K562 (cell line): ENCODE measurements at regions of chr1 and their contacts with region 1.

Region 1: GRCh38 chr1:45011837-45012638 is at the start of gene UROD:
- DNase-seq: peak; percentile 95 to 100 (median 96)
- ATAC-seq: peak; percentile 73
- H3K4me3 ChIP-seq: peak within 1 kb of the TSS; percentile 86
- H3K27ac ChIP-seq: peak within 1 kb of the TSS; percentile 85
- H3K4me1 ChIP-seq: peaks cover 44 to 45% of the 10 kb centered on the region in 2 experiments
- H3K27me3 ChIP-seq: no peaks in the 10 kb centered on the region
- CTCF ChIP-seq: no peak
- EP300 ChIP-seq: peak; percentile 72; the same call in 1 of the 2 replicates
- POLR2A ChIP-seq: peak; percentile 98
- RAD21 ChIP-seq: peak in 1 of 2 experiments; percentile 5; a peak in 1 of 4 replicates
- polyA plus RNA-seq, gene UROD: 2,545 to 2,933 TPM

Region 2: GRCh38 chr1:44757420-44757819 is 254.6 kb before region 1 on chr1:
- CTCF ChIA-PET with region 1: no interaction called
- POLR2A ChIA-PET with region 1: no interaction called
- in situ Hi-C with region 1: no loop called
- intact Hi-C with region 1: no loop called
- DNase-seq: no peak
- ATAC-seq: no peak
- H3K4me3 ChIP-seq: no peak overlapping the region
- H3K27ac ChIP-seq: no peak overlapping the region
- H3K4me1 ChIP-seq: no peaks in the 10 kb centered on the region
- H3K27me3 ChIP-seq: no peaks in the 10 kb centered on the region
- CTCF ChIP-seq: no peak
- EP300 ChIP-seq: no peak
- POLR2A ChIP-seq: no peak
- RAD21 ChIP-seq: no peak

Region 3: DNA sequence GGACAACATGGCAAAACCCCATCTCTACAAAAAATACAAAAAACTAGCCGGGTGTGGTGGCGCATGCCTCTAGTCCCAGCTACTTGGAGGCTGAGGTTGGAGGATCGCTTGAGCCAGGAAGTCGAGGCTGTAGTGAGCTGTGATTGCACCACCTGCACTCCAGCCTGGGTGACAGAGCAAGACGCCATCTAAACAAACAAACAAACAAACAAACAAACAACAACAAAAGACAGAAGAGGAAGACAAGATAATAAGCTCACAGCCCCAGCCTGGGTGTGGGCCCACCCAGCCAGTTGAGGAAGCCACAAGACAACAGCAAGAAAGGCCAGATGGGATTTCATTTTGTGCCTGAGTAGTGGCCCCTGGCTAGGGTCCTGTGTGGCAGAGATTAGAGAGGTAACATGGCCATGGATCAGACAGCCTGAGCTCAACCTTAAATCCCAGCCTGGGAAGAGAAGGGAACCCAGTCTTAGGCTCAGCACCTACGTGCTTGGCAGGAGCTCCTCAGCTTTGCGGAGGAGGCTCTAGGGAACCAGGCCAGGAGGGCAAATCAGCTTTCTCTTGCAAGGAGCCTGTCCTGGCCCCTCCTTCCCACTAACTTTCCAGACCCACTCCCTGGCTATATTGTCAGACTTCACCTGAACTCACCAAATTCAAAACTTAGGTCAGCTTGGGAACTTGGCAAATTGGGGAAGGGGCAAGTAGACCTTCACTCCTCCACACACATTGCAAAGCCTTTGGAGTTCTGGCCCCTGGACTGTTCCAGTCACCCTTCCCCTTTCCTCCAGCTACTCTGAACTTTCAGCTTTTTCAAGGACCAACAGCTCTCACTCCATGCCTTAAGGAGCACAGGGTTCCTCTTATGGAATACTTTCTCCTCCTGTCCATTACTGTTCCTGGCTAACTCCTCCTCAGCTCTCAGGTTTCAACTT is 219.0 kb before region 1 on chr1:
- CTCF ChIA-PET with region 1: no interaction called
- POLR2A ChIA-PET with region 1: interaction called, 8 read pairs
- in situ Hi-C with region 1: loop called (anchors 5 kb)
- intact Hi-C with region 1: loop called (anchors 5 kb)
- DNase-seq: no peak
- ATAC-seq: no peak
- H3K4me3 ChIP-seq: no peak overlapping the region
- H3K27ac ChIP-seq: no peak overlapping the region
- H3K4me1 ChIP-seq: peaks cover 16 to 20% of the 10 kb centered on the region in 2 experiments; a peak in 4 of 5 replicates
- H3K27me3 ChIP-seq: no peaks in the 10 kb centered on the region
- CTCF ChIP-seq: no peak
- EP300 ChIP-seq: no peak
- POLR2A ChIP-seq: no peak
- RAD21 ChIP-seq: no peak

Region 4: GRCh38 chr1:44835738-44836675 is 176.0 kb before region 1 on chr1:
- CTCF ChIA-PET with region 1: interaction called, 5 read pairs
- POLR2A ChIA-PET with region 1: interaction called, 7 read pairs
- in situ Hi-C with region 1: loop called (anchors 5 kb)
- intact Hi-C with region 1: loop called (anchors 2 kb)
- DNase-seq: peak; percentile 75 to 93 (median 81)
- ATAC-seq: peak; percentile 87
- H3K4me3 ChIP-seq: no peak overlapping the region
- H3K27ac ChIP-seq: no peak overlapping the region
- H3K4me1 ChIP-seq: peaks cover 30 to 36% of the 10 kb centered on the region in 2 experiments
- H3K27me3 ChIP-seq: no peaks in the 10 kb centered on the region
- CTCF ChIP-seq: peak; percentile 87 to 98 (median 92)
- EP300 ChIP-seq: peak; percentile 56; the same call in 1 of the 2 replicates
- POLR2A ChIP-seq: no peak
- RAD21 ChIP-seq: peak; percentile 82 to 93

Region 5: DNA sequence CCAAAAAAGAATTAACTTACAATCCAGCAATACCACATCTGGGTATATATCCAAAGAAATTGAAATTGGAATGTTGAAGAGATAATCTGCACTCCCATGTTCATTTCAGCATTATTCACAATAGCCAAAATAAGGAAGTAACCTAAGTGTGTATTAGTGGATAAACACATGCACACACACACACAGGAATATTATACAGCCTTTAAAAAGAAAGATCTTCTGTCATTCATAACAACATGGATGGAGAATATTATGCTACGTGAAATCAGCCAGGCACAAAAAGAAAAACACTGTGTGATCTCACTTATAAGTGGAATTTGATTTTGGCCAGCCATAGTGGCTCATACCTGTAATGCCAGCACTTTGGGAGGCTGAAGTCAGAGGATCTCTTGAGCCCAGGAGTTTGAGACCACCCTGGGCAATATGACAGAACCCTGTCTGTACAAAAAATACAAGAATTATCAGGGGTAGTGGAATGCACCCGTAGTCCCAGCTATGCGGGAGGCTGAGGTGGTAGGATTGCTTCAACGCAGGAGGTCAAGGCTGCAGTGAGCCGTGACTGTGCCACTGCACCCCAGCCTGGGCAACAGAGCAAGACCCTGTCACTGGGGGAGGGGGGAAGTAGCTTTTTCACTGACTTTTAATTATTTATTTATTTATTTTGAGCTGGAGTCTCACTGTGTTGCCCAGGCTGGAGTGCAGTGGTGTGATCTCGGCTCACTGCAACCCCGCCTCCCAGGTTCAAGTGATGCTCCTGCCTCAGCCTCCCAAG is 16.4 kb before region 1 on chr1:
- CTCF ChIA-PET with region 1: no interaction called
- POLR2A ChIA-PET with region 1: interaction called, 17 read pairs
- in situ Hi-C with region 1: no loop called
- intact Hi-C with region 1: no loop called
- DNase-seq: no peak
- ATAC-seq: no peak
- H3K4me3 ChIP-seq: no peak overlapping the region
- H3K27ac ChIP-seq: no peak overlapping the region
- H3K4me1 ChIP-seq: no peaks in the 10 kb centered on the region
- H3K27me3 ChIP-seq: no peaks in the 10 kb centered on the region
- CTCF ChIP-seq: no peak
- EP300 ChIP-seq: no peak
- POLR2A ChIP-seq: no peak
- RAD21 ChIP-seq: no peak

Region 6: DNA sequence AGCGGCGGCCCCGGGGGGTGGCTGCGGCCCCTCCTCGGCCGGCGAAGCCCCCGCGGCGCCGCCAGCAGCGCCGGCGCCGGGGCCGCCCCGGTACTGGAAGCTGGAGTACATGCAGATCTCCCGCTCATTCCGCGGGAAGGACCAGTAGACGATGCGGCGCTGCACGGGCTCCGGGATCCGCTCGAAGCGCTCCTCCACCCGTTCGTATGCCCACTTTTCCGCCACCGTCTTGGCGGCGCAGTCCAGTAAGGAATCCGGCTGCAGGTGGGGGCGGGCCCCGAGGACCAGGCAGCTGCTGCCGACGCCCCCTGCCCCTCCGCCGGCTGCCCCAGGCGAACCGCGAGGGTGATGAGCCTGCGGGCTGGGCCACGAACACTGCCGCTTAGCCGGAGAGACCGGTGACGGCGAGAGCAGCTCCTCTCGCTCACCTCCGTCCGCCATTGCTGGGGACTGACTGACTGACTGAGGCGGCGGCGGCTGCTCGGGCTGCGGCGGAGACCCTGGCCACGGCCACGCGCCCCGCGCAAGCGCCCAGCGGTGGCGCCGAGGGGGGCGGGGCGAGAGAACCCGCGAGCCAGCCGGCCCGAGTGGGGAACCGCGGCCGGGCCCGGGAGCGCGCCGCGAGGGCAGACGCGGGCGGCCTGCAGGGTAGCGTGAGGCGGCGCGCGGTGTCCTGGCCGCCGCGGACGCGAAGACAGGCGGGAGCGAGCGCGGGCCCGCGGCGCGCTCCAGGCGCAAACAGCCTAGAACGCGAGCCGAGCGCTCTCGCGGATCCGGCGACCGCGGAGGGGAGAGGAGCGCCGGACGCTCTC is 194.1 kb after region 1 on chr1 and contains the start of gene ZSWIM5:
- CTCF ChIA-PET with region 1: interaction called, 4 read pairs
- POLR2A ChIA-PET with region 1: interaction called, 5 read pairs
- in situ Hi-C with region 1: no loop called
- intact Hi-C with region 1: loop called (anchors 10 kb)
- DNase-seq: peak; percentile 57 to 73 (median 69)
- ATAC-seq: peak; percentile 89
- H3K4me3 ChIP-seq: peak within 1 kb of the TSS; percentile 49
- H3K27ac ChIP-seq: no peak within 1 kb of the TSS
- H3K4me1 ChIP-seq: peaks cover 4 to 12% of the 10 kb centered on the region in 2 experiments; a peak in 4 of 5 replicates
- H3K27me3 ChIP-seq: peaks cover 29 to 30% of the 10 kb centered on the region in 2 experiments
- CTCF ChIP-seq: no peak
- EP300 ChIP-seq: no peak
- POLR2A ChIP-seq: no peak
- RAD21 ChIP-seq: no peak
- polyA plus RNA-seq, gene ZSWIM5: not detected

Region 7: GRCh38 chr1:45339789-45340570 is 327.9 kb after region 1 on chr1 and contains the starts of genes MUTYH and TOE1:
- CTCF ChIA-PET with region 1: no interaction called
- POLR2A ChIA-PET with region 1: interaction called, 27 read pairs
- in situ Hi-C with region 1: no loop called
- intact Hi-C with region 1: no loop called
- DNase-seq: peak; percentile 98 to 99 (median 98)
- ATAC-seq: peak; percentile 95
- H3K4me3 ChIP-seq: peak within 1 kb of the TSS; percentile 66
- H3K27ac ChIP-seq: peak within 1 kb of the TSS; percentile 94
- H3K4me1 ChIP-seq: peaks cover 6 to 18% of the 10 kb centered on the region in 2 experiments; a peak in 4 of 5 replicates
- H3K27me3 ChIP-seq: no peaks in the 10 kb centered on the region
- CTCF ChIP-seq: no peak
- EP300 ChIP-seq: no peak; the same call in 1 of the 2 replicates
- POLR2A ChIP-seq: peak; percentile 99
- RAD21 ChIP-seq: no peak; a peak in 1 of 4 replicates
- polyA plus RNA-seq, gene MUTYH: 3.4 to 6.2 TPM
- polyA plus RNA-seq, gene TOE1: 59.8 to 85.7 TPM

Region 8: DNA sequence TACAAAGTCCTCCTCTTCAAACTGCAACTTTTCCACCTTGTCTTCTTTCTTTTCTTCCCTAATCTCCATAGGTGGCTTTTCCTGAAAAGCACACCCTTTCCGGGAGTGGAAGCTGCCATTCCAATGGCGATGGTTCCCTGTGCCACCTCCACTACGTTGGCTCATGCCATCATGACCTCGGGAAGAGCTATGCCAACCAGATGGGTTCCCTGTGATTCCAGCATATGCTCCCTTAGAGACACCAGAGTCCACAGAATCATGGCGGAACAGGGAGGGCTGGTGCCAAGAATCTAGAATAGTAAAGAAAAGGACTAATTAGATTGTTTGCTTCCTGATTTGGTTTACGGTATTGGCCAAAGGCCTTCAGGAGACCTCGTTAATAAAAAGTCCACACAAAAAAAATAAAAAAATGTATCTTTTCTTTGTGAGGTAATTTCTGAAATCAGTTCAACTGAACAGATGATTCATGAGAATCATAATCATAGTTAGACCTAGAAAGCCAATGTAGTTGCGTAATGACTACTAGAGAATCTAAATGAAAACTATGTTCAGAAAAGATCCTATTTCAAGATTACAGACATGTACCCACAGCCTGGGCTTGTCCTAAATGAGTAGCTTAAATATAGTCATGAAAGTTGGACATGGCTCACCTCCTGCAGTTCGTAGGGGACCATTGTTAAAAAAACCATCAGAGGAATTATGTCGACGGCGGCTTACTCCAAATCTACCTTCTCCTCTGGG is 642.7 kb after region 1 on chr1:
- CTCF ChIA-PET with region 1: no interaction called
- POLR2A ChIA-PET with region 1: no interaction called
- in situ Hi-C with region 1: no loop called
- intact Hi-C with region 1: no loop called
- DNase-seq: no peak
- ATAC-seq: no peak
- H3K4me3 ChIP-seq: no peak overlapping the region
- H3K27ac ChIP-seq: no peak overlapping the region
- H3K4me1 ChIP-seq: no peaks in the 10 kb centered on the region
- H3K27me3 ChIP-seq: no peaks in the 10 kb centered on the region
- CTCF ChIP-seq: no peak
- EP300 ChIP-seq: no peak
- POLR2A ChIP-seq: no peak
- RAD21 ChIP-seq: no peak

Region 9: DNA sequence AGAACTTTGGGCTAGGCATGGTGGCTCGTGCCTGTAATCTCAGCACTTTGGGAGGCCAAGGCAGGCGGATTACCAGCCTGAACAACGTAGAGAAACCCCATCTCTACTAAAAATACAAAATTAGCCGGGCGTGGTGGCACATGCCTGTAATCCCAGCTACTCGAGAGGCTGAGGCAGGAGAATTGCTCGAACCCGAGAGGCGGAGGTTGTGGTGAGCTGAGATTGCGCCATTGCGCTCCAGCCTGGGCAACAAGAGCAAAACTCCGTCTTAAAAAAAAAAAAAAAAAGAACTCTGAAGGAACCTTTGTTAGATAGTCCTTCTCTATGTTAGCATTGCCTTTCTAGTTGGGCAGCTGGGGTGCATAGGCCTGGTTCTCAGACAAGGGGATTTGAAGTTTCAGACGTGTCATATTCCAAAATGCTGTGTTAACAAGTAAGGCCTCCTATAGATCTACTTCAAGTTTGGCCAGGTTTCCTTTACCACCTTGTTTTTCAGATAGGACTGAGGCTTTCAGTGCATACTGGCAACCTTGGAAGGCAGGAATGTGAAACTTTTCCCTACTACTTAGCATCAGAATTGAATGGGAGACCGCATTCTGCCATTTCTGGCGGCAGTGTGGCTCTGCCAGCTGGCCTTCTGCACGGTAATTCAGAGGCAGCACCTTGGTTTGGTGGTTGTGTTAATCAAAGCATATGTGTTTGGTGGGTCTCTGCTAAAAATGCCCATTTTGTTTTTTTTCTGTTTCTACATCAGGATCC is 1297.5 kb after region 1 on chr1:
- CTCF ChIA-PET with region 1: no interaction called
- POLR2A ChIA-PET with region 1: no interaction called
- in situ Hi-C with region 1: no loop called
- intact Hi-C with region 1: no loop called
- DNase-seq: no peak
- ATAC-seq: no peak
- H3K4me3 ChIP-seq: no peak overlapping the region
- H3K27ac ChIP-seq: no peak overlapping the region
- H3K4me1 ChIP-seq: peaks cover 15 to 19% of the 10 kb centered on the region in 2 experiments; a peak in 4 of 5 replicates
- H3K27me3 ChIP-seq: no peaks in the 10 kb centered on the region
- CTCF ChIP-seq: no peak
- EP300 ChIP-seq: no peak
- POLR2A ChIP-seq: no peak
- RAD21 ChIP-seq: no peak